Mammary epithelial cell (primary cell): ENCODE measurements at regions of chr2 and their contacts with region 1.

Region 1: GRCh38 chr2:74198461-74199274 is at the start of gene MTHFD2:
- DNase-seq: peak; percentile 97
- H3K4me3 ChIP-seq: peak within 1 kb of the TSS; percentile 67 to 86 (median 72)
- H3K27ac ChIP-seq: peak within 1 kb of the TSS; percentile 87
- H3K4me1 ChIP-seq: peaks cover 15% of the 10 kb centered on the region
- H3K27me3 ChIP-seq: no peaks in the 10 kb centered on the region
- CTCF ChIP-seq: peak; percentile 66 to 87
- total RNA-seq, gene MTHFD2: 302 to 350 TPM

Region 2: GRCh38 chr2:73268830-73269685 is 929.6 kb before region 1 on chr2:
- CTCF ChIA-PET with region 1: no interaction called
- dilution Hi-C with region 1: no loop called
- in situ Hi-C with region 1: no loop called
- intact Hi-C with region 1: loop called (anchors 10 kb)
- DNase-seq: peak; percentile 70
- H3K4me3 ChIP-seq: peak overlapping the region; percentile 14 to 50 (median 50)
- H3K27ac ChIP-seq: no peak overlapping the region
- H3K4me1 ChIP-seq: peaks cover 13% of the 10 kb centered on the region
- H3K27me3 ChIP-seq: no peaks in the 10 kb centered on the region
- CTCF ChIP-seq: peak in 1 of 2 donors; percentile 34

Region 3: GRCh38 chr2:73939419-73939818 is 259.2 kb before region 1 on chr2:
- CTCF ChIA-PET with region 1: no interaction called
- dilution Hi-C with region 1: no loop called
- in situ Hi-C with region 1: no loop called
- intact Hi-C with region 1: no loop called
- DNase-seq: peak; percentile 98
- H3K4me3 ChIP-seq: no peak overlapping the region
- H3K27ac ChIP-seq: peak overlapping the region; percentile 89
- H3K4me1 ChIP-seq: peaks cover 58% of the 10 kb centered on the region
- H3K27me3 ChIP-seq: no peaks in the 10 kb centered on the region
- CTCF ChIP-seq: peak in 1 of 2 donors; percentile 60

Region 4: GRCh38 chr2:73952499-73953458 is 245.9 kb before region 1 on chr2:
- CTCF ChIA-PET with region 1: no interaction called
- dilution Hi-C with region 1: no loop called
- in situ Hi-C with region 1: no loop called
- intact Hi-C with region 1: no loop called
- DNase-seq: peak; percentile 57
- H3K4me3 ChIP-seq: no peak overlapping the region
- H3K27ac ChIP-seq: no peak overlapping the region
- H3K4me1 ChIP-seq: peaks cover 7% of the 10 kb centered on the region
- H3K27me3 ChIP-seq: no peaks in the 10 kb centered on the region
- CTCF ChIP-seq: no peak

Region 5: GRCh38 chr2:73993376-73994145 is 205.1 kb before region 1 on chr2:
- CTCF ChIA-PET with region 1: no interaction called
- dilution Hi-C with region 1: no loop called
- in situ Hi-C with region 1: no loop called
- intact Hi-C with region 1: loop called (anchors 5 kb)
- DNase-seq: peak; percentile 46
- H3K4me3 ChIP-seq: no peak overlapping the region
- H3K27ac ChIP-seq: peak overlapping the region; percentile 54
- H3K4me1 ChIP-seq: peaks cover 43% of the 10 kb centered on the region
- H3K27me3 ChIP-seq: no peaks in the 10 kb centered on the region
- CTCF ChIP-seq: no peak

Region 6: GRCh38 chr2:74162951-74163350 is 35.7 kb before region 1 on chr2:
- CTCF ChIA-PET with region 1: no interaction called
- dilution Hi-C with region 1: no loop called
- in situ Hi-C with region 1: no loop called
- intact Hi-C with region 1: no loop called
- DNase-seq: no peak
- H3K4me3 ChIP-seq: no peak overlapping the region
- H3K27ac ChIP-seq: no peak overlapping the region
- H3K4me1 ChIP-seq: no peaks in the 10 kb centered on the region
- H3K27me3 ChIP-seq: no peaks in the 10 kb centered on the region
- CTCF ChIP-seq: no peak

Region 7: DNA sequence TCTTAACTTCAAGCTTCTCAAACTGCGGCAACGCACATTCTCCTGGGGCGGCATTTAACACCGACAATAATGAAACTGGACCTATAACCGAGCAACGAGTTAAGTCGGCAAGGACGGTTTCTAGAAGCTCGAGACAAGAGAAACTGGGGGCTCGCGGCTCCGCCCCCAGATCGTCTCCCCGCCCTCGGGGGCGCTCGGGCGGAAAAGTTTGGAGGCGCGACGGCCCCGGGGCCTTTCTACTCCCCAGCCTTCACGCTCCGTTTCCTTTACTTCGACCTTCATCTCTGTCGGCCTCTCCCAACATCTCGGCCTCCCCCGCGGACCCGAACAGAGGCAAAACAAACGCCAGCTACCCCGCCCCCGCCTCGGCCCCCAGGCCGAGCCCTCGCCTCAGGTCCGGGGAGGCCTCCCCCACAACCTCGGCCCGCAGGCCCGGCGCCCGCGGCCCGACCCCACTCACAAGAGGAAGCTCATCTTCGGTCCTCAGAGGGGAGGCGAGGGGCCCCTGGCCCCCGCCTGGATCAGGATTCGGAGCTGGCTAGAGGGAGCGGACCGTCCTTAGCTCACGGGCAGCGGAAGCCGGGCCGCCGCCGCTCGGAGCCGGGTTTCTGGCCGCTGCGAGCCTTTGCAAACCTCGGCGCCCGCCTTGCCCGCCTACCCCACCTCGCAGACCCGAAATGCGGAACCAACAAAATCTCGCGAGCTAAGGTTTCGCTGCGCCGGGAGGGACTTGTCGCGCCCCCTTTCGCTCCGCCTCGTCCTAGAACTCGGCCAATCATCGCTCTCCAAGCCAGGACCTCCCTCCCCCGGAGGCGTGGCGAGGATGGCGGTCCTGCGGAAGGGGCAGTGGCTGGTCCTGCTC is 20.2 kb before region 1 on chr2 and contains the start of gene MOB1A:
- CTCF ChIA-PET with region 1: no interaction called
- dilution Hi-C with region 1: no loop called
- in situ Hi-C with region 1: no loop called
- intact Hi-C with region 1: loop called (anchors 1 kb)
- DNase-seq: peak; percentile 98
- H3K4me3 ChIP-seq: peak within 1 kb of the TSS; percentile 76 to 91 (median 82)
- H3K27ac ChIP-seq: peak within 1 kb of the TSS; percentile 81
- H3K4me1 ChIP-seq: peaks cover 3% of the 10 kb centered on the region
- H3K27me3 ChIP-seq: no peaks in the 10 kb centered on the region
- CTCF ChIP-seq: no peak
- total RNA-seq, gene MOB1A: 104 to 125 TPM

Region 8: DNA sequence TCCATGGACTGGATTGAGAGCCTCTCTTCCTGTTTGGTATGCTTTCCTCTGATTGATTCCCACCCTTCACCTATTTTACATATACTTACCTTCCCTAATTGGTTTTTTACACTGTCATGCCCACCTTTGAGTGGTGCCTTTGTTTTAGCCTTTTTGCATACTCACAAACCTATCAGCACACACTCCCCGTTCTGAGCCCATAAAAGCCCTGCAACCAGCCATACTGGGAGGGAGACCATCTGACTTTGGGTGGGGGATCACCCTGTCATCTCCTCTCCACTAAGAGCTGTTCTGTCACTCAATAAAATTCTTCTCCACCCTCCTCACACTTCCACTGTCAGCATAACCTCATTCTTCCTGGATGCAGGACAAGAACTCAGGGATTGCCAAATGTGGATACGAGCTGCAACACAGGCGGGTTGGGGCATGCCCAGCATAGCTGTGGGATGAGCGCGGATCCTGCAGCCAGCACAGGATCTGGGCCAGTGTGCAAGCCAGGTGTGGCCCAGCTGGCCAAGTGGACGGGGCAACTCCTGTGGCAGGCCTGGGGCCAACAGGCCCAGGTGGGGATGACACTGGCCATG is 10.6 kb before region 1 on chr2:
- CTCF ChIA-PET with region 1: interaction called, 3 read pairs
- dilution Hi-C with region 1: no loop called
- in situ Hi-C with region 1: no loop called
- intact Hi-C with region 1: loop called (anchors 1 kb)
- DNase-seq: peak; percentile 94
- H3K4me3 ChIP-seq: no peak overlapping the region
- H3K27ac ChIP-seq: peak overlapping the region; percentile 28
- H3K4me1 ChIP-seq: peaks cover 17% of the 10 kb centered on the region
- H3K27me3 ChIP-seq: no peaks in the 10 kb centered on the region
- CTCF ChIP-seq: no peak

Region 9: GRCh38 chr2:75204833-75205232 is 1006.2 kb after region 1 on chr2:
- CTCF ChIA-PET with region 1: no interaction called
- dilution Hi-C with region 1: no loop called
- in situ Hi-C with region 1: no loop called
- intact Hi-C with region 1: no loop called
- DNase-seq: no peak
- H3K4me3 ChIP-seq: no peak overlapping the region
- H3K27ac ChIP-seq: no peak overlapping the region
- H3K4me1 ChIP-seq: peaks cover 9% of the 10 kb centered on the region
- H3K27me3 ChIP-seq: peaks cover 19% of the 10 kb centered on the region
- CTCF ChIP-seq: no peak